ENCODE measurements at regions of chr2 and their contacts with region 1.

Region 1: DNA sequence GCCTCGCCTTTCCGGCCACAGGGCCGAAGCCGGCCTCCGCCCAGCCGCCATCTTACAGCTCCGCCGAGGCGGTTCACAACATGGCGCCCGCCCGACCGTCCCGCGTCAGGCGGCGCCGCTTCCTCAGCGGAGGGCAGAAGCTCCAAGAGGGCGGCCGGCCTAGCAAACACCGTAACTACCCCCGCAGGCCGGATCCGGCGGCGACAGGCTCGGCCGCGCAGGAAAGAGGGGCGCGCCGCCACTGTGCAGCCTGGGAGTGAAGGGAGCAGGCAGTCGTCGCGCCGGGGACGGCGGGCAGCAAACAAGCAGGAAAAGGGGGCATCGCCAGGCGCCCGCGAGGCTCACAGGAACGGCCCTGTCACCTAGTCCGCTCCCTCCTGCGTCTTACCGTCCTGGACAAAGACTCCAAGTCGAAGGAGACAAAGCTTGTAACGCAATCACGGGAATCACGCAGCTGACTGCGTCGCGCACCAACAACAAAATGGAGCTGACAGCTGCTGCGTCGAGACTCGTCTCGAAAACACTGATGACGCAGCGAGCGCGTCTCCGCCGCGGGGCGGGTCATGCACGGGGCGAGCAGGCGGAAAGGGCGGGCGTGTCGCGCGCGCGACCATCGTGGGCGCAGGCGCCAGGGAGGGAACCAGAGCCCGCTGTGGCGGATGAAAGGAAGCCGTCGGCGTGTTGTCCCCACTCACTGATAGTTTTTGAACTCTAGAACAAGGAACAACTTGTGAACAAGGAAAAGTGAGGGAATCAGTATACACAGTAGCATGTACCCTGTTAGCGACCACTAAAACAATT is at the start of gene CLK1:
- DNase-seq: peak; percentile 98
- H3K4me3 Mint-ChIP-seq: peak within 1 kb of the TSS; percentile 87
- H3K27ac Mint-ChIP-seq: peak within 1 kb of the TSS; percentile 100
- H3K4me1 Mint-ChIP-seq: peaks cover 36% of the 10 kb centered on the region
- H3K27me3 Mint-ChIP-seq: no peaks in the 10 kb centered on the region
- total RNA-seq, gene CLK1: 112 to 114 TPM

Region 2: DNA sequence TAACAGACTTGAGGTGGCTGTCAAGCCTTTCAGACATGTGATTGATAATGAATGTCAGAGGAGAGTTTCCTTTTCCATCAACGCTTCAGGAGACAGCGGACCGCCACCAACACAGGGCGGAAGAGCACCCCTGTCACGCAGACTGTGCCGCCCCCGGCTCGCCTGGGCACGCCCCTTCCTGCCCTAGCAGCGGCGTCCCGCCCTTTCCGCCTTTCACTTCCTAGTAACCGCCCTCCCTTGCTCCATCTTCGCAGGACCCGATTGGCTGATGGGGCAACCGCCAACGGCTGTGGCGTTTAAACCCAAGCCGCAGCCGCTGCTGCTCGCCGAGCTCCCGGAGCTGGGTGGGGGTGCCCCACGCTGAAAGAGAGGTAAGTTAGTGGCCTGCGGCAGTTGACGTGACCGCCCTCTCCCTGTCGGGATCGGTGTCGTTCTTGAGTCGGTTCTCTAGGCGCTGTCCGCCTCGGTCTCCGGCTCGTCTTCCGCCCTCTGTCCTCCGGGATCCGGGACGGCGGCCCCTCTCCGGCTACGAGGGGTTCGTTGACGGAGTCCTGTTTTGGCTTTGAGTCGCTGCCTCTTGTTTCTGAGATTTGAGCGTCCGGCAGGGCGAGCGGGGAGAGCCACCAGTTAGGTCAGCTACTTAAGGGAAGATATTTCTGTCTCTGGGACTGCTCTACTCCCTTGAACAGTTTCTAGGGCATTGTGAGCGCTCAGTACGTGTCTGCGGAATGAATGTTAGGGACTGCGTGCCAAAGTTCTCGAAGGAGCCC is 338.3 kb before region 1 on chr2 and contains the start of gene SGO2:
- CTCF ChIA-PET with region 1: no interaction called
- POLR2A ChIA-PET with region 1: interaction called, 4 read pairs
- intact Hi-C with region 1: loop called (anchors 5 kb)
- DNase-seq: peak; percentile 98
- H3K4me3 Mint-ChIP-seq: peak within 1 kb of the TSS; percentile 88
- H3K27ac Mint-ChIP-seq: peak within 1 kb of the TSS; percentile 73
- H3K4me1 Mint-ChIP-seq: peaks cover 20% of the 10 kb centered on the region
- H3K27me3 Mint-ChIP-seq: no peaks in the 10 kb centered on the region
- total RNA-seq, gene SGO2: 40.5 to 40.7 TPM

Region 3: DNA sequence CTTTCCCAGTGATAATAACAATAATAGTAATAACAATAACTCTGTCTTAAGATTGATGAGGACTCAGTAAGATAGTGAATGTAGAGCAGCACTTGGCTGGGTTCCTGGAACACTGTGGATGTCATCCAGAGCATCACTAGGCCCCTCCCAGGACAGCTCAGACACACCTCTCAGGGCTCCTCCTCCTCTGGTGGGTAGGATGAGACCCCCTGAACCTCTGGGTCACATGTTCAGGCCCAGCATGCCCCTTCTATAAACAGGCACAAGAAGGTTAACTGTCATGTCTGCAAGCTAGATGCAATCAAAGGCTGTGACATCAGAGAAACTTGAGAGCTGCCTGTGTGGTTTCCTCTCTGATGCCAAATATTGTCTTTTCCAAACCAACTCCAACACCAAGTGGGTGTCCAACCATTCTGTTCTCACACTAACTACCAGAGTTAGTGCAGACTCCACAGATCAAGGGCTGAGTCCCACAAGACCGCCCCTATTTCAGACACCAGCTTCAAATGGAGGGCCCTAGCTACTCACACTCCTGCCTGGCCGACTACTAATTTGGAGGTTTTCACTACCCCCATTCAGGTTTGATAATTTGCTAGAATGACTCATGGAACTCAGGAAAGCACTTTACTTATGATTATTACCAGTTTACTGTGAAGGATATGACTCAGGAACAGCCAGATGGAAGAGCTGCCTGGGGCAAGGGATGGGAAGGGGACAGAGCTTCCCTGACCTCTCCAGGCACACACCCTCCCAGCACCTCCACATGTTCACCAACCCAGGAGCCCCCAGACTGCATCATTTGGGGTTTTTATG is 99.0 kb before region 1 on chr2:
- CTCF ChIA-PET with region 1: interaction called, 4 read pairs
- POLR2A ChIA-PET with region 1: interaction called, 3 read pairs
- intact Hi-C with region 1: loop called (anchors 2 kb)
- DNase-seq: peak; percentile 75
- H3K4me3 Mint-ChIP-seq: peak overlapping the region; percentile 42
- H3K27ac Mint-ChIP-seq: peak overlapping the region; percentile 96
- H3K4me1 Mint-ChIP-seq: peaks cover 32% of the 10 kb centered on the region
- H3K27me3 Mint-ChIP-seq: no peaks in the 10 kb centered on the region

Region 4: GRCh38 chr2:200839513-200839912 is 24.9 kb before region 1 on chr2:
- CTCF ChIA-PET with region 1: no interaction called
- POLR2A ChIA-PET with region 1: no interaction called
- intact Hi-C with region 1: no loop called
- DNase-seq: no peak
- H3K4me3 Mint-ChIP-seq: no peak overlapping the region
- H3K27ac Mint-ChIP-seq: no peak overlapping the region
- H3K4me1 Mint-ChIP-seq: no peaks in the 10 kb centered on the region
- H3K27me3 Mint-ChIP-seq: no peaks in the 10 kb centered on the region

Region 5: GRCh38 chr2:201130524-201131186 is 266.3 kb after region 1 on chr2:
- CTCF ChIA-PET with region 1: interaction called, 5 read pairs
- POLR2A ChIA-PET with region 1: interaction called, 44 read pairs
- intact Hi-C with region 1: loop called (anchors 1 kb)
- DNase-seq: peak; percentile 55
- H3K4me3 Mint-ChIP-seq: peak overlapping the region; percentile 92
- H3K27ac Mint-ChIP-seq: peak overlapping the region; percentile 94
- H3K4me1 Mint-ChIP-seq: peaks cover 54% of the 10 kb centered on the region
- H3K27me3 Mint-ChIP-seq: no peaks in the 10 kb centered on the region